ENCODE measurements at regions of chr22 and their contacts with region 1.

Region 1: DNA sequence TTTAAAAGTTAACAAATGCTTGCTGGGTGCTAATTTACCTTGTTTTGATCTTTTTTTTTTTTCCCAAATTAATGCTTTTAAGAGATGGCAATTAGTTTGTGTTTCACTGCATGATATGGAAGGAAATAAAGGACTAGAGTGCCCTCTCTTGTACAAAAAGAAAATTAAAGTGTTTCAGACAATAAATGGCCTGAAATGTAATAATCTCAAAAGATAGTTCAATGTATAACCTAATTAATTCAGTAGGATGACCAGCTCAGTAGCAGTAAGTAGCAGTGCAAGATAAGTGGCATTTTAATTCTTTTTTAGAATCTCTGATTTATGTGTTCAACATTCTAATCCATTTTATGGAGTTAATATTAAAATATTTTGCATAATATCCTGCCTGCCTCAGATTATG is 39.9 kb upstream of the MYO18B start:
- DNase-seq: no peak
- H3K4me3 Mint-ChIP-seq: peak overlapping the region; percentile 75
- H3K27ac Mint-ChIP-seq: peak overlapping the region; percentile 36
- H3K4me1 Mint-ChIP-seq: peaks cover 68% of the 10 kb centered on the region
- H3K27me3 Mint-ChIP-seq: no peaks in the 10 kb centered on the region

Region 2: GRCh38 chr22:25148149-25148691 is 553.8 kb before region 1 on chr22:
- intact Hi-C with region 1: no loop called
- DNase-seq: no peak
- H3K4me3 Mint-ChIP-seq: no peak overlapping the region
- H3K27ac Mint-ChIP-seq: no peak overlapping the region
- H3K4me1 Mint-ChIP-seq: no peaks in the 10 kb centered on the region
- H3K27me3 Mint-ChIP-seq: no peaks in the 10 kb centered on the region

Region 3: DNA sequence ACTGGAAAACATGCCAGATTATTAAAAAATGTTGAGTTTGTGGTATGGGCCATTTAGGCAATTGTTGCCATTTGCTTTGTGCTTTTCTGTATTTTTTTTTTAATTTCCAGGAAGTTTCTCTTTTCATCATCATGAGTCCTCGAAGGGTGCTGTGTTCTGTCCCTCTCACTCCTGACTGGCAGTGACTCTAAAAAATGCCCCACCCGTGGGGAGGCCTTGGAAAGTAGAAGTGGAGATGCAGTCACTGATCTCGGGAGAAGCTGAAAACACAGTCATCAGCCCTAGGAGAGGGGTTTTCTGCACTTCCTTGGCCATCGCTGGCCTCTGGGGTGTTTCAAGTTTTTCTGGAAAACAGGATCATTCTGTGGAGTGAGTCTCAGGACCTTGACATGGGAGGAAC is 236.1 kb before region 1 on chr22:
- intact Hi-C with region 1: loop called (anchors 1 kb)
- DNase-seq: no peak
- H3K4me3 Mint-ChIP-seq: no peak overlapping the region
- H3K27ac Mint-ChIP-seq: peak overlapping the region; percentile 25
- H3K4me1 Mint-ChIP-seq: peaks cover 19% of the 10 kb centered on the region
- H3K27me3 Mint-ChIP-seq: no peaks in the 10 kb centered on the region

Region 4: GRCh38 chr22:25572708-25573171 is 129.3 kb before region 1 on chr22:
- intact Hi-C with region 1: loop called (anchors 2 kb)
- DNase-seq: no peak
- H3K4me3 Mint-ChIP-seq: peak overlapping the region; percentile 3
- H3K27ac Mint-ChIP-seq: peak overlapping the region; percentile 46
- H3K4me1 Mint-ChIP-seq: peaks cover 69% of the 10 kb centered on the region
- H3K27me3 Mint-ChIP-seq: no peaks in the 10 kb centered on the region

Region 5: DNA sequence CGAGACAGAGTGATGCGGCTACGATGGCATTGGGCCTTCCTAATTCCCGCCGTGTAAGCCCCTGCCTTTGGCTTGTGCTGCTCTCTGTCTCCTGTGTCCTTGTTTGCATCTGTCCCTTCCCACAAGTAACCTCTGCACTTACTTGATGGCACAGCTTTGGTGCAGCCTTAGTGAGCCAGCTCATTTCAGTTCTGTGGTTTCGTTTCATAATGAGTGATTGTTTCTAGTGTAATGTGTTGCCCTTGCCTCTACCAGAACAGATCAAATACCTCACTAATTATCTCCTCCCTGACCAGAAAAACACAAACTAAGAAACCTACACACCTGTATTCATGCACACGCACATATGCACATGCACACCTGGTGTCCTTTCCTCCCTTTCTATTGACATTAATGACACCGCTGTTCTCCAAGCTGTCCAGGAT is 78.7 kb before region 1 on chr22:
- intact Hi-C with region 1: loop called (anchors 2 kb)
- DNase-seq: no peak
- H3K4me3 Mint-ChIP-seq: peak overlapping the region; percentile 23
- H3K27ac Mint-ChIP-seq: peak overlapping the region; percentile 54
- H3K4me1 Mint-ChIP-seq: peaks cover 63% of the 10 kb centered on the region
- H3K27me3 Mint-ChIP-seq: no peaks in the 10 kb centered on the region

Region 6: GRCh38 chr22:25736378-25737011 is 34.5 kb after region 1 on chr22:
- intact Hi-C with region 1: loop called (anchors 2 kb)
- DNase-seq: peak; percentile 71
- H3K4me3 Mint-ChIP-seq: peak overlapping the region; percentile 71
- H3K27ac Mint-ChIP-seq: peak overlapping the region; percentile 98
- H3K4me1 Mint-ChIP-seq: peaks cover 64% of the 10 kb centered on the region
- H3K27me3 Mint-ChIP-seq: peaks cover 2% of the 10 kb centered on the region

Region 7: DNA sequence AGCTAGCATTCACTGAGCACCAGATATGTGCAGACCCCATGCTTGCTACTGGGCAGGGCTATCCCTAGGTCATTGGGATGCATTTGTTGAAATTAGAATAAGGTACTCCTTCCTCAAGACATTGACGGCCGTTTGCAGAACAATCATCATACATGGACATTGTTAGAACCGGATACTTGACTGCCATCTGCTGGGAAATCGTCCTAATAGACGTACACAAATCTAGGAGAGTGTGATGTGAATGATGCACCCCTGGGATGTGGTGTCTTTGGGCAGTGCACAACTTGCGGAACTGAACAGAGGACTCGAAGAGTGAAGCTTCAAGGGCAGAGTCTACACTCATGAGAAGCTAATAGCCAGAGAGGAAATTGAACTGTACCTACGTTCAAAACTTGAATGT is 75.8 kb after region 1 on chr22:
- intact Hi-C with region 1: loop called (anchors 1 kb)
- DNase-seq: peak; percentile 8
- H3K4me3 Mint-ChIP-seq: no peak overlapping the region
- H3K27ac Mint-ChIP-seq: no peak overlapping the region
- H3K4me1 Mint-ChIP-seq: peaks cover 4% of the 10 kb centered on the region
- H3K27me3 Mint-ChIP-seq: no peaks in the 10 kb centered on the region